ENCODE measurements at regions of chr1 and their contacts with region 1.

Region 1: GRCh38 chr1:86119214-86119764 is 37.3 kb downstream of the COL24A1 start:
- DNase-seq: no peak
- ATAC-seq: no peak

Region 2: GRCh38 chr1:85962457-85962856 is 156.8 kb before region 1 on chr1:
- intact Hi-C with region 1: loop called (anchors 5 kb)
- DNase-seq: no peak
- ATAC-seq: no peak

Region 3: DNA sequence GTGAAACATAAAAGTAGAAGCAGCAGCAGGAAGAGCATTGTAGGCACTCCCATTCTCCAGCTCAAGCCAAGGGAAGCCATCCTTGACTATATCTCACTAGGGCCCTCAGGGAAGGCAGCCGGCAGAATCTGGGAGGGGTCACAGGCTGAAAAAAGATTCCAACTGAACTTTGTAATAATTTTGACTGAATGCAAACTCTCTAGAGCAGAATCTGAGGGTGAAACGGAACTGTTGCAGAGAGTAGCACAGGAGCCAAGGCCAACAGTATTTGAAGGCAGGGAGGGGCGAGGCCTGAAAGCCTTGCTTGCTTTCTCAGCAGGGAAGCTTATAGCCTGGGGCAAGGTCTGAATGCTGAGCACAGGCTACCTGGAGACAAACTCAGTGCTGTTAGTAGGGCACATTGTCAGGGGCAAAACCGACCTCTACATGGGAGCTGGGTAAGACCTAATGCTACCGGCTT is 143.3 kb before region 1 on chr1:
- intact Hi-C with region 1: no loop called
- DNase-seq: no peak
- ATAC-seq: peak; percentile 46

Region 4: GRCh38 chr1:86183810-86184209 is 64.5 kb after region 1 on chr1:
- intact Hi-C with region 1: no loop called
- DNase-seq: no peak
- ATAC-seq: peak; percentile 80